CD8-positive, alpha-beta T cell (primary cell): ENCODE measurements at regions of chr9 and their contacts with region 1.

Region 1: DNA sequence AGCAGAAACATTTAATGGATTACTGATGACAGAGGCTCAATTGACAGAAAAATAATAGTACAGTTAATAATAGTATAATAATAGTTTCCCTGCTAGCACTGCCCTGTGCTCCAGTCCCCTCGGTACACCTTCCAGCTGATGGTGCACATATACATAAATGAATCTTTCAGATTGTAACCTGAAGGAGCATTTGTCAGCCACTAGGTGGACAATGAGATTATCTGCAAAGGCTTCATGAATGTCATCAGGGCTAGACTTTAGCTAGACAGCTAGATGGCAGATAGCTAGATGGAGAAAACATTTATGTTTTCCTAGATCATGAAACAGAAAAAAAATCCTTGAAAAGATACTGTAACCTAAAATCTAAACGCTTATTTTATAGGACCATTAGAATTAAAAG is 304.4 kb upstream of the SMC2 start:
- DNase-seq: peak in 1 of 9 experiments; percentile 7
- ATAC-seq: no peak
- H3K4me3 ChIP-seq: no peak overlapping the region
- H3K4me3 Mint-ChIP-seq: no peak overlapping the region
- H3K27ac ChIP-seq: no peak overlapping the region
- H3K27ac Mint-ChIP-seq: no peak overlapping the region
- H3K4me1 ChIP-seq: no peaks in the 10 kb centered on the region
- H3K4me1 Mint-ChIP-seq: no peaks in the 10 kb centered on the region
- H3K27me3 ChIP-seq: no peaks in the 10 kb centered on the region
- H3K27me3 Mint-ChIP-seq: no peaks in the 10 kb centered on the region
- CTCF ChIP-seq: no peak

Region 2: DNA sequence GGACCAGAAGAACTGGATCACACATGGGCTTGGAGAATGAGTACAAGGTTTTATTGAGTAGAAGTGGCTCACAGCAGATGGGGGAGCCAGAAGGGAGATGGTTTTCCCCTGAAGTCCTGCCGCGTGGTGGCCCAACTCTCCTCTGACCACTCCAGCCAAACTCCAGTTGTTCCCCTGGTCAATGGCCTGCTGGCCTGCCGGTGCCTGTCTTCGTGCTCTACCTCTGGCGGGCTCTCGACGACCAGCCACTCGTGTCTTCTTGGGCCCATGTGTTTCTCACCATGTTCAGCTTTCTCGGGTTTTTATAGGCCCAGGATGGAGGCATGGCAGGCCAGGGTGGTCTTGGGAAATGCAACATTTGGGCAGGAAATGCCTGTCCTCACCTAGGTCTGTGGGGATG is 274.9 kb before region 1 on chr9:
- CTCF ChIA-PET with region 1: no interaction called
- POLR2A ChIA-PET with region 1: no interaction called
- intact Hi-C with region 1: no loop called
- DNase-seq: no peak
- ATAC-seq: no peak
- H3K4me3 ChIP-seq: no peak overlapping the region
- H3K4me3 Mint-ChIP-seq: no peak overlapping the region
- H3K27ac ChIP-seq: no peak overlapping the region
- H3K27ac Mint-ChIP-seq: no peak overlapping the region
- H3K4me1 ChIP-seq: no peaks in the 10 kb centered on the region
- H3K4me1 Mint-ChIP-seq: no peaks in the 10 kb centered on the region
- H3K27me3 ChIP-seq: no peaks in the 10 kb centered on the region
- H3K27me3 Mint-ChIP-seq: no peaks in the 10 kb centered on the region
- CTCF ChIP-seq: no peak

Region 3: GRCh38 chr9:103615994-103616393 is 173.7 kb before region 1 on chr9:
- CTCF ChIA-PET with region 1: no interaction called
- POLR2A ChIA-PET with region 1: no interaction called
- intact Hi-C with region 1: loop called in 1 of 2 experiments (anchors 5 kb)
- DNase-seq: no peak
- ATAC-seq: no peak
- H3K4me3 ChIP-seq: no peak overlapping the region
- H3K4me3 Mint-ChIP-seq: no peak overlapping the region
- H3K27ac ChIP-seq: no peak overlapping the region
- H3K27ac Mint-ChIP-seq: no peak overlapping the region
- H3K4me1 ChIP-seq: no peaks in the 10 kb centered on the region
- H3K4me1 Mint-ChIP-seq: no peaks in the 10 kb centered on the region
- H3K27me3 ChIP-seq: no peaks in the 10 kb centered on the region
- H3K27me3 Mint-ChIP-seq: no peaks in the 10 kb centered on the region
- CTCF ChIP-seq: no peak